ENCODE measurements at regions of chr11 and their contacts with region 1.

Region 1: DNA sequence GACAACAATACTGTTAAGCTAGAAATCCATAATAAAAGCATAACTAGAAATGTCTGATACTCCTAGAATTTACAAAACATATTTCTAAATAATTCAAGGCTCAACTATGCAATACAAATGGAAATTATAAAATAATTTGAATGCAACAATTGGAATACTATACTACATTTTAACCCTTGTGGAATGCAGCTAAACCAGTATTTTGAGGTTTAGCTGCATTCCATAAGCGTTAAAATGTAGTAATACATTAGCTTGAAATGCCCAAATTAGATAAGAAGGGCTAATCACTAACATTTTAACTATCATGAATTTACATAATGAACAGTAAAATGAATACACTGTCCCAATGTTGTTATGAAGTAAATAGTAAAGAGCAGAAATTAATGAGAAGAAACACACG is 617.2 kb upstream of the CHORDC1 start:
- DNase-seq: peak; percentile 56
- H3K4me3 ChIP-seq: peak overlapping the region in 1 of 3 experiments; percentile 11
- H3K27ac ChIP-seq: no peak overlapping the region
- H3K4me1 ChIP-seq: peaks cover 3% of the 10 kb centered on the region
- H3K27me3 ChIP-seq: no peaks in the 10 kb centered on the region
- CTCF ChIP-seq: no peak

Region 2: DNA sequence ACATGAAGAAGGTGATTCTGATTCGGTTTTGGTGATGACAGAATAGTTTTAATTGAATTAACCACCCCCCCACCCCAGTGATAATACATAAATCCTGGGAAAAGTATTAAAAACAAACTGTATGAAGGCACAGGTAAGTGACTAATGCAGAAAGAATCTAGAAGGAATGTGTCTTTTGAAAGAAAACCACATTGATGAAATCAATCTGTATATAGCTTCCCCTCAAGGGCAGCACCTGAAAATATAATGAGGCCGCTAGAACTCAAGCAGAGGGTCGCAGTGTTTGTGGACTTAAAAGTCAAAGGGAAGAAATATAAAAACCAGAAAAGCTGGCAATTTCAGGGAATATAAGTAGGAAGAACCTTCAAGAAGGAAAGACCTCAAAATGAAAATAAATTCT is 36.7 kb before region 1 on chr11:
- CTCF ChIA-PET with region 1: no interaction called
- dilution Hi-C with region 1: no loop called
- in situ Hi-C with region 1: no loop called
- intact Hi-C with region 1: loop called (anchors 5 kb)
- DNase-seq: peak; percentile 56
- H3K4me3 ChIP-seq: peak overlapping the region in 2 of 3 experiments; percentile 33 to 42
- H3K27ac ChIP-seq: peak overlapping the region; percentile 60
- H3K4me1 ChIP-seq: peaks cover 20% of the 10 kb centered on the region
- H3K27me3 ChIP-seq: no peaks in the 10 kb centered on the region
- CTCF ChIP-seq: no peak

Measured in mammary epithelial cell (primary cell).